Activated CD4-positive, alpha-beta T cell treated with anti-CD3 and anti-CD28 coated beads, Interleukin-2, amount 10 ng/mL, durations not matched to agents 24 days and 14 days (primary cell): ENCODE measurements at regions of chr19 and their contacts with region 1.

Region 1: GRCh38 chr19:57599761-57600383 is at the start of gene ZNF530:
- DNase-seq: peak; percentile 95
- H3K4me3 Mint-ChIP-seq: peak within 1 kb of the TSS; percentile 85
- H3K27ac Mint-ChIP-seq: peak within 1 kb of the TSS; percentile 74
- H3K4me1 Mint-ChIP-seq: peaks cover 14% of the 10 kb centered on the region
- H3K27me3 Mint-ChIP-seq: no peaks in the 10 kb centered on the region
- total RNA-seq, gene ZNF530: 4.5 and 5.7 TPM in 2 replicates

Region 2: DNA sequence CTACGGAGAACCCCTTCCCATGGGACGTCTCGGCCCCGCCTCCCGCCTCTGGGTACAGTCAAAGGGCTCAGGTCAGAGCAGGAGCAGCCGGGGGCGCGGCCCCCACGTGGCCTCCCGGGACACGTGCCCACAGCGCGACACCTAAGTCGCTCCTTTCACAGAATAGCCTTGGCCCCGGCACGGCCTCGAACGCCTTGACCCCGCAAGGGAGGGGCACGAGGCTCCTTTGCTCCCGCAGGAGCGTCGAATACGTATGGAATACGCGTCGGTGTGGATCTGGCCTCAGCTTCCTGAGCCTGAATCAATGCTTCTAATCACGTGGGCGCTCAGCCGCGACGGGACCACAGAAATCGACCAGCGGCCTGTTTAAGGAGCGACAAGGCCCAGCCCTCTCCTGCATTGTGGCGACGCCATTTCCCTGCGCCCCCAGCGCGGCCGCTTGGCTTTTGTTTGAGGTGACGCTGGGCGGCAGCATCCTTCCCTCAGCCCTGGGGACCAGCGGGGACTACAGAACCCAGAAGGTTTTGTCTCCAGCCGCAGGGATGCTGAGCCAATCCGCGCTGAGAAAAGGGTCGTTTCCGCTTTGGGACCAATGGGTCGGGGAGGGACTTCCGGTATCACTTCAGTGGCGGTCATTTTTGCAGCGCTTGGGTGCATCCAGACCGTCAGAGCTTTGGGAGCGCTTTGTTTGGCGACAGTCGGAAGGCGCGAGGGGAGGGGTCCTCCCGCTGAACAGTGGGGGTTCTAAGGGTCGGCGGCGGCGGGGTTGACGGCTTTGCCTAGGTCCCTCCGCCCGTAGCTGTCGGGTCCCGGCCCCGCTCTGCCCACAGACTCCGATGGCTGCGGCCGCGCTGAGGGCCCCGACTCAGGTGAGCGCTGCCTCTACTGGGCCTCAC is 16.1 kb before region 1 on chr19 and contains the start of gene ZIK1:
- intact Hi-C with region 1: loop called (anchors 1 kb)
- DNase-seq: peak; percentile 94
- H3K4me3 Mint-ChIP-seq: peak within 1 kb of the TSS; percentile 92
- H3K27ac Mint-ChIP-seq: peak within 1 kb of the TSS; percentile 72
- H3K4me1 Mint-ChIP-seq: peaks cover 16% of the 10 kb centered on the region
- H3K27me3 Mint-ChIP-seq: no peaks in the 10 kb centered on the region
- total RNA-seq, gene ZIK1: 2.8 and 4.1 TPM in 2 replicates

Region 3: DNA sequence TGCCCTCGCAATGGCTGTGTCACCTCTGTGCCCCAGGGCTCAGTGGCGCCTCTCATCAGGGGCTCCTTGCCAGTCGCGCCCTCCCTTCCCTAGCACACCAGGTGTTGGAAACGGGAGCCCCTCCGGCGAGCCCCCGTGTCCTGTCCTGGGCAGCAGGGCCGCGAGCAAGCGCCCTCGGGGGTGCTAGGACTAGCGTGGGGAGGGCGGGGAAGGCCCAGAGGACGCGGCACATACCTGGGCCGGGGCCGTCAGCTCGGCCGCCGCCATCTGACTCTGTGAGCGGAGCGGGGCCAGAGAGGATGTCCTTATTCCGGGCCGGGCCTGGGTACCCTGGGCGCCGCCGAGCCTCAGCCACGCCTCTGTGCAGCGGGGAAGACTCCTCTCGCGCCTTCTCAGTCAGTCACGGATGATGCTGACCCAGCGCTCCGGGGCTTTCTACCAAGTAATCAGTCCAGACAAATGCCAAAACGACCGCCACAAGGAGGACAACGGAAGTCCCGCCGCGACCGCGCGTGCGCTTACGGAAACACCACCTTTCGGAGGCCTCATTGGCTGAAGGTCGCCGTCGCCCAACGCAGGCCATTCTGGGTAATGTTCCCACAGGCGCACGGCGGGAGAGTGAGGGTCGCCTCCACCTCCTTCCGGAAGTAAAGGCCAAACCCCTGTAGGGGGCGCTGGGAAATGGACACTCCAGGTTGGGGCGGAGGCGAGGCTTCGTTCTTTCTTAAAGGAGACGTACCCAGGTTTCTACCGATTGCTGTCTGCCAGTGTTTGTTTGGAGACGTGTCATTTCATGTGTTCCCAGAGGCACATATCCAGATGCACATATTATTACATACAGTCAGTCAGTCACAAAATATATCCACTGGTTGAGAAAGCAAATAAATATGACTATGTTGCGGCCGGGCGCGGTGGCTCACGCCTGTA is 347.6 kb after region 1 on chr19 and contains the start of gene ZNF256:
- intact Hi-C with region 1: no loop called
- DNase-seq: peak; percentile 94
- H3K4me3 Mint-ChIP-seq: peak within 1 kb of the TSS; percentile 96
- H3K27ac Mint-ChIP-seq: peak within 1 kb of the TSS; percentile 90
- H3K4me1 Mint-ChIP-seq: peaks cover 11% of the 10 kb centered on the region
- H3K27me3 Mint-ChIP-seq: no peaks in the 10 kb centered on the region
- total RNA-seq, gene ZNF256: 3.2 and 3.9 TPM in 2 replicates